Breast epithelium (tissue), 4 donors: ENCODE measurements at regions of chr6 and their contacts with region 1.

Region 1: GRCh38 chr6:165167861-165168260 is 141.5 kb downstream of the C6orf118 start:
- DNase-seq: no peak
- H3K4me3 ChIP-seq: no peak overlapping the region
- H3K27ac ChIP-seq: no peak overlapping the region
- H3K4me1 ChIP-seq: no peaks in the 10 kb centered on the region
- H3K27me3 ChIP-seq: no peaks in the 10 kb centered on the region
- CTCF ChIP-seq: no peak
- POLR2A ChIP-seq: no peak

Region 2: GRCh38 chr6:165183496-165184140 is 15.8 kb after region 1 on chr6:
- intact Hi-C with region 1: loop called (anchors 1 kb)
- DNase-seq: no peak
- H3K4me3 ChIP-seq: no peak overlapping the region
- H3K27ac ChIP-seq: no peak overlapping the region
- H3K4me1 ChIP-seq: no peaks in the 10 kb centered on the region
- H3K27me3 ChIP-seq: no peaks in the 10 kb centered on the region
- CTCF ChIP-seq: no peak
- POLR2A ChIP-seq: no peak